Head of caudate nucleus (tissue), 42 donors: ENCODE measurements at regions of chr1 and their contacts with region 1.

Region 1: GRCh38 chr1:48572646-48573261 is 100.8 kb upstream of the SPATA6 start:
- DNase-seq: peak; percentile 65 to 94 (median 84)

Region 2: GRCh38 chr1:48414264-48414663 is 158.5 kb before region 1 on chr1:
- intact Hi-C with region 1: no loop called
- DNase-seq: no peak

Region 3: DNA sequence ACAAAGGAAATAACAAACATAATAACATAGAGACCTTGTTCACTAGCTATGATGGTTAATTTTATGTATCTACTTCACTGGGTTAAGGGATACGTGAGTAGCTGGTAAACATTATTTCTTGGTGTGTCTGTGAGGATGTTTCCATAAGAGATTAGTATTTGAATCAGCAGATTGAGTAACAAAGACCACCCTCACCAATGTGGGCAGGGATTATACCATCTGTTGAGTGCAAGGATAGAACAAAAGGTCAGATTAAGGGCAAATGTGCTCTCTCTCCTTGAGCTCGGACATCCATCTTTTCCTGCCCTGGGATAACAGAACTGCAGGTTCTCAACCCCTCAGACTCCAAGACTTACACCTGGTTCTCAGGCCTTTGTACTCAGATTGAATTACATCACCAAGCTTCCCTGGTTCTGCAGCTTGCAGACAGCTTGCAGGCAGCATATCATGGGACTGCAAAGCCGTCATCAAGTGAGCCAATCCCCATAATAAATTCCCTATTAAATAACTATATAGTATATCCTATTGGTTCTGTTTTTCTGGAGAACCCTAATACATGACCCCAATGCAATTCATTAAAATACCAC is 109.9 kb before region 1 on chr1:
- intact Hi-C with region 1: no loop called
- DNase-seq: no peak

Region 4: GRCh38 chr1:48697066-48697707 is 124.4 kb after region 1 on chr1:
- intact Hi-C with region 1: loop called (anchors 5 kb)
- DNase-seq: peak in 41 of 42 donors; percentile 47 to 93 (median 84)

Region 5: DNA sequence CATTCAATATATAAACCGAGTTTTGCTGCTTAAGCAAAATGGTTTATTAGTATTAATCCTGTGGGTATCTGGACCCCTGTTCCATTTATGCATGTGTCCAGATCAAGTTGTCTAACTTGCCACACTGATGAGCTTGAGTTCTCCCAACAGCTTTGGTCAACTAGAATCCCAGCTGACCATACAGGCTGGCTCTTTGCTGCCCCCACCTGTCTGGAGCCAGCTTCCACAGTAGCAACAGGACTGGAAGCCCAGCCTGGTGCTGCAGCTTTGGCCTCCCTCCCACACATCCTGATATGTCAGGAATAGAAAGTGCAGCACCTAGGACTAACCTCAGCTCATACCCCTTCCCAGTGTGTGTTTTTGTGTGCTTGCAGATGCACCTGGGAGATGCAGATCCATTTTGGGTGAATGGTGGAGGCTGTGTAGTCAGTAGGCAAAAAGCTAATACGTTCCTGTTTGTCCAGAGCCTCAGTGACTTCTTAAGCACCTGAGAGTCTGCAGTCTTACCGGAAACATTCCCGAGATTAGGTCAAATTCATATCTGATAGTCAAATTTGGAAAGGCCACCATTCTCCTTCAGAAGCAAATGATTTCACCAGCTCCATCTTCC is 244.9 kb after region 1 on chr1:
- intact Hi-C with region 1: loop called (anchors 5 kb)
- DNase-seq: peak; percentile 12 to 83 (median 58)